ENCODE measurements at regions of chr3 and their contacts with region 1.

Region 1: GRCh38 chr3:99720985-99721632 is 82.7 kb downstream of the COL8A1 start:
- DNase-seq: peak; percentile 82
- ATAC-seq: peak; percentile 81
- H3K4me3 ChIP-seq: no peak overlapping the region; the same call in 1 of the 2 replicates
- H3K27ac ChIP-seq: no peak overlapping the region
- H3K4me1 ChIP-seq: peaks cover 18% of the 10 kb centered on the region
- H3K27me3 ChIP-seq: no peaks in the 10 kb centered on the region
- CTCF ChIP-seq: no peak

Region 2: DNA sequence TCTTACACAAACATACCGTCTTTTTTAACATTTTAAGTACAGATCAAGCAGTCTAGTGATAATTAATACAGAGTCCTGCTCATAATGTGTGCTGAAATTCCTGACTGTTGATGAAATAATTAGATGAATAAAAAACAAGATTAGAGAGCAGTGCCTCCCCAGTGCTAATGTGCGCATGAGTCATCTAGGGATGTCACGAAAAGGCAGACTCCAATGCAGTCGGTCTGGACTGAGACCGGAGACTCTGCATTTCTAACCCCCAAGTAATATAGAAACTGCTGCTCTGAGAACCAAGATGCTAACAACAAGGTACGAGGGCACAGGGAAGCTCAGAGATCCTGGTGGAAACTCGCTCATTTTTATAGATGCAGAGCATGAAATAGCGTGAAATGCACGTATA is 21.3 kb before region 1 on chr3:
- CTCF ChIA-PET with region 1: no interaction called
- POLR2A ChIA-PET with region 1: no interaction called
- intact Hi-C with region 1: loop called (anchors 2 kb)
- DNase-seq: no peak
- ATAC-seq: no peak
- H3K4me3 ChIP-seq: no peak overlapping the region
- H3K27ac ChIP-seq: no peak overlapping the region
- H3K4me1 ChIP-seq: peaks cover 5% of the 10 kb centered on the region; the same call in 1 of the 2 replicates
- H3K27me3 ChIP-seq: no peaks in the 10 kb centered on the region
- CTCF ChIP-seq: no peak

Region 3: GRCh38 chr3:100395679-100396431 is 674.7 kb after region 1 on chr3:
- CTCF ChIA-PET with region 1: no interaction called
- POLR2A ChIA-PET with region 1: interaction called, 17 read pairs
- intact Hi-C with region 1: no loop called
- DNase-seq: no peak
- ATAC-seq: no peak
- H3K4me3 ChIP-seq: no peak overlapping the region
- H3K27ac ChIP-seq: no peak overlapping the region
- H3K4me1 ChIP-seq: peaks cover 19% of the 10 kb centered on the region
- H3K27me3 ChIP-seq: no peaks in the 10 kb centered on the region
- CTCF ChIP-seq: no peak